ENCODE measurements at regions of chr13 and their contacts with region 1.

Region 1: DNA sequence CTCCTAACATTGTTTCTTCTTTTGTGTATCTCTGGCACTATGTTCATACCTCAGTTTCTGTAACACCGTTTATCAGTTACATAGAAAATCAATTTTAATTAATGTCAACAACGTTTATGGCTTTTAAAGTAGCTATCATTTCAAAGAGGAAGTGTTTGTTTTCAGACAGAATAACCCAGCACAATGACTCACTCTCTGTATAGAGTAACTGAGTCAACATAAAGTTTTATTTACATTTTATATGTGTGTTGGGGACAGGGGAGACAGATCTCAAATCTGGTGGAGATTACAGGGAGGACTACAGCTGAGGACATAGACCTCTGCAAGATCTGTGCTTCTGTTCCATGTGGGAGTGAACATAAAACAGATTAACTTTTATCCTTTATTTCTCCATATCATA is 2590.1 kb downstream of the PCDH9 start:
- DNase-seq: no peak
- H3K4me3 ChIP-seq: no peak overlapping the region
- H3K27ac ChIP-seq: no peak overlapping the region
- H3K4me1 ChIP-seq: no peaks in the 10 kb centered on the region
- H3K27me3 ChIP-seq: no peaks in the 10 kb centered on the region
- CTCF ChIP-seq: no peak

Region 2: GRCh38 chr13:64164435-64164834 is 475.6 kb before region 1 on chr13:
- CTCF ChIA-PET with region 1: no interaction called
- dilution Hi-C with region 1: no loop called
- in situ Hi-C with region 1: no loop called
- intact Hi-C with region 1: no loop called
- DNase-seq: no peak
- H3K4me3 ChIP-seq: no peak overlapping the region
- H3K27ac ChIP-seq: no peak overlapping the region
- H3K4me1 ChIP-seq: no peaks in the 10 kb centered on the region
- H3K27me3 ChIP-seq: no peaks in the 10 kb centered on the region
- CTCF ChIP-seq: no peak

Region 3: GRCh38 chr13:64347664-64348063 is 292.3 kb before region 1 on chr13:
- CTCF ChIA-PET with region 1: no interaction called
- dilution Hi-C with region 1: no loop called
- in situ Hi-C with region 1: no loop called
- intact Hi-C with region 1: no loop called
- DNase-seq: no peak
- H3K4me3 ChIP-seq: no peak overlapping the region
- H3K27ac ChIP-seq: no peak overlapping the region
- H3K4me1 ChIP-seq: no peaks in the 10 kb centered on the region
- H3K27me3 ChIP-seq: no peaks in the 10 kb centered on the region
- CTCF ChIP-seq: no peak

Region 4: DNA sequence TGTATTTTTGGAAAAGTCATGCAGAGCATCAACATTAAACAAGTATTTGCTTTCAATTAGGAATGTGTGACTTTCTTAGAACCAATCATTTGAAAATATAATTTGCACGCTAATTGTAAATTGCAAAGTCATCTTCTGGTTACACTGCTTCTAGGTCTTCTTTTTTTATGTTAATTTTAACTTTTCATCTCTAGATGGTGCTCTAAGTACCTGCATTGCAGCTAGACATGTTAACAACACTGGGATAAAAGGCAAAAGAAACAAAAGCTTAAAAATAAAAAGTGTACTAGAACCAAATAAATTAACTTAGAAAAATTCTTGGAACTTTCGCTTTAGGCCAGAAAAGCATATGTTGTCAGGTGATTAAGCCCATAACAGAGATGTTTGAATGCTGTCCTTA is 168.1 kb before region 1 on chr13:
- CTCF ChIA-PET with region 1: no interaction called
- dilution Hi-C with region 1: no loop called
- in situ Hi-C with region 1: no loop called
- intact Hi-C with region 1: no loop called
- DNase-seq: peak; percentile 10
- H3K4me3 ChIP-seq: no peak overlapping the region
- H3K27ac ChIP-seq: no peak overlapping the region
- H3K4me1 ChIP-seq: no peaks in the 10 kb centered on the region
- H3K27me3 ChIP-seq: peaks cover 3% of the 10 kb centered on the region
- CTCF ChIP-seq: peak; percentile 24 to 65

Region 5: DNA sequence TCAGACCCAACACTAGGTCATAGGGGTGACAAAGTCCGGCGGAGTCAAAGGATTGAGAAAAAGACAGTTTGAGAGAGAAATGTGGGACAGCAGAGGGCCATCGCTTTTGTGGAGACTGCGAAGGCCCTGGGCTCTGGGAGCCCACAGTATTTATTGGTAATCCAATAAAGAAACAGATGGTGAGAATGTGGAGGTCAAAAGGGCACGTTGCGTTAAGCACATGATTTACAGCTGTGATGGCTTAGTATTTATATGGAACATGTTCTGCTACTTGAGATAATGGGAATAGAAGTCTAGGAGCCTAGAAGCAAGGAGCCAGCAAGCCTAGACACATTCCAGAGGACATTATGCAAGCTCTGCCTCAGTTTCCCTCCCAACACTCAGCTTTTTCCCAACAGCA is 69.1 kb after region 1 on chr13:
- CTCF ChIA-PET with region 1: interaction called, 11 read pairs
- dilution Hi-C with region 1: no loop called
- in situ Hi-C with region 1: no loop called
- intact Hi-C with region 1: no loop called
- DNase-seq: no peak
- H3K4me3 ChIP-seq: no peak overlapping the region
- H3K27ac ChIP-seq: no peak overlapping the region
- H3K4me1 ChIP-seq: no peaks in the 10 kb centered on the region
- H3K27me3 ChIP-seq: no peaks in the 10 kb centered on the region
- CTCF ChIP-seq: no peak

Region 6: DNA sequence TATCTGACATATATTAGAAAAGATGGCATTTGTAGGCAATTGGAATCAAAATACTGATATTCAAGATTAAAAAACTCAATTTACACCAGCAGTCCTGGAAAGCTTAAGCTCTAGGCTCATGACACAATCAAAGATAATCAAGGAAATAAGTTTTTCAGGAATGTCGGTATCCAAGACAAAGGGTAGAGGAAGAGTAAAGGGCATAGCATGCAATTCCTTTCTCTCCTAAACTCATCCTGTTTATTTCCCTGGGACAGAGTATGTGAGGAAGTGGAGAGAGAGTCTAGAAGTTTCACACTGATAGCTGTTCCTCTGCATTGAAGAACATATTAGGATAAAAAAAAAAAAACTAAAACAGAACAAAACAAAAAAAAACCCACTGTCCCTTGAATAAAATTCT is 138.0 kb after region 1 on chr13:
- CTCF ChIA-PET with region 1: no interaction called
- dilution Hi-C with region 1: loop called (anchors 10 kb)
- in situ Hi-C with region 1: no loop called
- intact Hi-C with region 1: no loop called
- DNase-seq: no peak
- H3K4me3 ChIP-seq: no peak overlapping the region
- H3K27ac ChIP-seq: no peak overlapping the region
- H3K4me1 ChIP-seq: no peaks in the 10 kb centered on the region
- H3K27me3 ChIP-seq: no peaks in the 10 kb centered on the region
- CTCF ChIP-seq: no peak

Measured in mammary epithelial cell (primary cell).